ENCODE measurements at regions of chr7 and their contacts with region 1.

Region 1: GRCh38 chr7:44962483-44963251 is 16.1 kb downstream of the MYO1G start:
- DNase-seq: peak; percentile 27
- H3K4me3 ChIP-seq: peak overlapping the region in 2 of 3 experiments; percentile 27 to 31
- H3K27ac ChIP-seq: no peak overlapping the region
- H3K4me1 ChIP-seq: peaks cover 3% of the 10 kb centered on the region
- H3K27me3 ChIP-seq: peaks cover 2 to 4% of the 10 kb centered on the region in 2 experiments
- CTCF ChIP-seq: no peak
- POLR2A ChIP-seq: no peak

Region 2: GRCh38 chr7:44712012-44712411 is 250.7 kb before region 1 on chr7:
- CTCF ChIA-PET with region 1: no interaction called
- POLR2A ChIA-PET with region 1: no interaction called
- dilution Hi-C with region 1: no loop called
- intact Hi-C with region 1: no loop called
- DNase-seq: no peak
- H3K4me3 ChIP-seq: no peak overlapping the region
- H3K27ac ChIP-seq: no peak overlapping the region
- H3K4me1 ChIP-seq: no peaks in the 10 kb centered on the region
- H3K27me3 ChIP-seq: no peaks in the 10 kb centered on the region
- CTCF ChIP-seq: no peak
- POLR2A ChIP-seq: no peak

Region 3: GRCh38 chr7:44838751-44839150 is 123.9 kb before region 1 on chr7:
- CTCF ChIA-PET with region 1: no interaction called
- POLR2A ChIA-PET with region 1: interaction called, 13 read pairs
- dilution Hi-C with region 1: no loop called
- intact Hi-C with region 1: no loop called
- DNase-seq: no peak
- H3K4me3 ChIP-seq: no peak overlapping the region
- H3K27ac ChIP-seq: no peak overlapping the region
- H3K4me1 ChIP-seq: no peaks in the 10 kb centered on the region
- H3K27me3 ChIP-seq: no peaks in the 10 kb centered on the region
- CTCF ChIP-seq: no peak
- POLR2A ChIP-seq: no peak

Region 4: DNA sequence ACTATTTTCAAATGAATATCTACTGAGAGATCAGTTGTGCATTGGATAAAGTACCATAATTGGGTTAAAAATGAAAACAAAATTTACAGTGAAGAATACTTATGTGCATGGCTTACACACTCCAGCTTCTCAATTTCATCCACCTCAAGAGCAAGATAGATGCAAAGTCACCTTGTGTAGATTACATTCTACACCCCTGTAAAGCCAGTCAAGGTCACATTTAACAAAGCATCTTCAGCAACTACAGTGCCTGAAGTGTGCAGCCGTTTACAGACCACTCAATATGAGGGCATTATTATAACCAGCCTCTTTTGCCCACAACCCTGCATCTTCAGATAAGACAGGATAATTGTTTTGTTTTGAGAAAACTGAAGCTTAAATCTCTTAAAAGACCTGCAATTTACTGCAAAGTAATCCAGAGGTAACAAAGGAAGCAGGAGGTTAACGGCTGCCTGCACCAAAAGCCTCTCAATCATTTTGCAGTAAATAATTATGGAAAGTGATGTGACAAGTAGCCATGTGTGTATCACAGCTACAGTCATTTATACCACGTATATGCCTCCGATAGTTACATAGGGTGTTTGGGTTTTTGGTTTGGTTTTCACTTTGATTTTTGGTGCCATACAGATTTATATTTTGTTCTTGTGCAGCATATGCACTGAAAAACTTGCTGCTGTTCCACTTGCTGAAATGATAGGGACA is 82.2 kb before region 1 on chr7:
- CTCF ChIA-PET with region 1: no interaction called
- POLR2A ChIA-PET with region 1: no interaction called
- dilution Hi-C with region 1: no loop called
- intact Hi-C with region 1: no loop called
- DNase-seq: peak; percentile 6
- H3K4me3 ChIP-seq: peak overlapping the region; percentile 4 to 78 (median 8)
- H3K27ac ChIP-seq: peak overlapping the region; percentile 42
- H3K4me1 ChIP-seq: peaks cover 44% of the 10 kb centered on the region
- H3K27me3 ChIP-seq: no peaks in the 10 kb centered on the region
- CTCF ChIP-seq: no peak
- POLR2A ChIP-seq: no peak

Region 5: DNA sequence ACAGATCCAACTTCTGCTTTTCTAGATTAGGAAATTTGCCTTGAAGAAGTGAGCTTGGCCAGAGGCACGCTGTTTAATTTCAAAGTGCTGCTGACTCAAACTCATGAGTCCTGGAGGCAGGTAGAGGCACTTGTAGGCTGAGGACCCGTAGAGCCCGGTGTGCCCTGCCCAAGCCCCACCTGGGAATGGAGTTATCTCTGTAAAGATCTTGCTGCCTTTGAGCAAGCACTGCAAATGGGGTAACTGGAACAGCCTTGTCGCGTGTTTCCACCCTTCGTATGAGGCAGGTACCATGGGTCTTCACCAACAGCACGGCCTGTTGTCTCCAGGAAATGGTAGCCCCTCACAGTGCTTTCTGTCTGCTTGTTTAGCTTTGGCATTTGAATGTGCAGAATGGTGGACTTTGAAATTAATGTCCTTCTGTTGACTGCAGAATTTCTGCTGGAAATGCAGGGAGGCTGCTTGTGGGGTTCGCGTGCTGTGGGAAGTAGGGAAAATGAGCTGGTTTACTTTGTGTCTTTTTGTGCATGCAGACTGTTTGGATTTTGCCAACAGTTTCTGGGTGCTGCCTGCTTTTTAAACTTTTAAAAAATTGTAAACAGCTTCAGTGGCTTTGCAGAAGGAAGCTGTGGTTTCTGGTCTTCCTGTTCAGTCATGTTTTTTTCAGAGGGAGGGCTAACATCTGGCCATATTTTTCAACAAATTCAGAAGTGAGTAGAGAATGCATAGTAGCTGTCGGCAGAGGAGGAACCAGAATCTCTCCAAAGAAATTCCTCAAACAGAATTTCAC is 64.5 kb after region 1 on chr7:
- CTCF ChIA-PET with region 1: no interaction called
- POLR2A ChIA-PET with region 1: no interaction called
- dilution Hi-C with region 1: no loop called
- intact Hi-C with region 1: no loop called
- DNase-seq: peak; percentile 31
- H3K4me3 ChIP-seq: no peak overlapping the region
- H3K27ac ChIP-seq: peak overlapping the region; percentile 3
- H3K4me1 ChIP-seq: peaks cover 15% of the 10 kb centered on the region
- H3K27me3 ChIP-seq: no peaks in the 10 kb centered on the region
- CTCF ChIP-seq: no peak
- POLR2A ChIP-seq: no peak

Measured in endothelial cell of umbilical vein (primary cell).